HEK293T (cell line): ENCODE measurements at regions of chr5 and their contacts with region 1.

Region 1: DNA sequence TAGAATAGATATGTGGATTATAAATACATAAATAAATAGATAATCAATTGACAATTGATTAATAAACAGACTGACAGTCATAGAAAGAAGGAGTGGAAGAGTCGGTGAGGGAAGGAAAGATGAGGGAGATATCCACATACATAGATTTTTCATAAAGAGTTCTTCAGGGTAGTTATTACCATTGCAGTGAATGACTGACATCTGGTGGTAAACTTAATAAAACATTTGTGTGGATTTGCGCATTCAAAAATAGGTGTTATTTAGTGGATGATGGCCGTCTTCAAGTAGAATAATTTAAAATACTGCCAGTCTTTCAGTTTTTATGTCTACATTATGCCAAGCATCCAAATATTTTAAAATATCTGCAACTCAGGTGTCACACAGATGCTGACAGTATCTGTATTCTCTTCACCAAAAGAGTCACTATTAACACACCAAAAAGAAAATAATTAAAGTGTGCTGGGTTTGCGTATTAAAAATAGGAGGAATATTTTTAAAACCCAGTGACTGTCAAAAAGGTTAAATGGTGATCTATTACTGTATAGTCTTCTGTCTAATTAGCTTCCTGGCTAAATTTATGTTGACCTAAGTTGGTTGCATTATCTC is 78.8 kb downstream of the GIN1 start:
- DNase-seq: no peak

Region 2: DNA sequence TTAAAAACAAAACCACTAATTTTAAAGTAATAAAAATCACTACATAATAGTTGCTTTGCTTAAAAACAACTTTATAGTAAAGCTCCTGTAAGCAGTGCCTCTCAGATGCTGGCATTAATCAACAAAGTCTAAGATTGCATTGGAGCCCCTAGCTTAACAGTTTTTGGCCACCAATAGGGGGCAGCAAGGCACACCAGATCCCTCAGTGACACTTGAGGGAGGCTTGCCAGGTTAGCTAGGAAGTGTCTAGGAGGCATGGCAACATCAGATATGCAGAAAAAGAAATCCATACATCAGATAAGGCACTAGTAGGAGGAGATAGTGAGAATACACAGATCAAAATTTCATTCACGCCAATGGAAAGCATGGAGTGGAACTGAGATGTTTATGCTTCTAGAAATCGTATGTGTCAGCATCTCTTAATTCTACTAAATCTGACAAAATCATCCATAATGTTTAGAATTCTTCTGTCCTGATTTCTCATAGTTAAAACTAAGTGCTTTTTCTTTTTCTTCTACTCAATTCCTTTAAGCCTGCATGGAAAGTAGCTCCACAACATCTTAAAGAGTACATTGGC is 359.7 kb before region 1 on chr5:
- CTCF ChIA-PET with region 1: interaction called, 12 read pairs
- POLR2A ChIA-PET with region 1: no interaction called
- DNase-seq: peak; percentile 69

Region 3: GRCh38 chr5:103148213-103148612 is 107.0 kb after region 1 on chr5:
- CTCF ChIA-PET with region 1: no interaction called
- POLR2A ChIA-PET with region 1: no interaction called
- DNase-seq: no peak

Region 4: GRCh38 chr5:103178167-103178566 is 137.0 kb after region 1 on chr5:
- CTCF ChIA-PET with region 1: no interaction called
- POLR2A ChIA-PET with region 1: no interaction called
- DNase-seq: peak; percentile 7